T-cell (primary cell): ENCODE measurements at regions of chrX and their contacts with region 1.

Region 1: GRCh38 chrX:49000636-49001035 is 1.4 kb downstream of the GRIPAP1 start:
- DNase-seq: no peak
- ATAC-seq: no peak
- H3K4me3 ChIP-seq: no peak overlapping the region
- H3K4me3 Mint-ChIP-seq: peak overlapping the region; percentile 97 to 99 (median 98)
- H3K27ac ChIP-seq: no peak overlapping the region
- H3K27ac Mint-ChIP-seq: no peak overlapping the region
- H3K4me1 ChIP-seq: peaks cover 0 to 23% of the 10 kb centered on the region in 2 experiments
- H3K4me1 Mint-ChIP-seq: peaks cover 25 to 43% (median 29%) of the 10 kb centered on the region in 3 donors
- H3K27me3 ChIP-seq: no peaks in the 10 kb centered on the region
- H3K27me3 Mint-ChIP-seq: peaks cover 0 to 5% of the 10 kb centered on the region in 2 donors

Region 2: DNA sequence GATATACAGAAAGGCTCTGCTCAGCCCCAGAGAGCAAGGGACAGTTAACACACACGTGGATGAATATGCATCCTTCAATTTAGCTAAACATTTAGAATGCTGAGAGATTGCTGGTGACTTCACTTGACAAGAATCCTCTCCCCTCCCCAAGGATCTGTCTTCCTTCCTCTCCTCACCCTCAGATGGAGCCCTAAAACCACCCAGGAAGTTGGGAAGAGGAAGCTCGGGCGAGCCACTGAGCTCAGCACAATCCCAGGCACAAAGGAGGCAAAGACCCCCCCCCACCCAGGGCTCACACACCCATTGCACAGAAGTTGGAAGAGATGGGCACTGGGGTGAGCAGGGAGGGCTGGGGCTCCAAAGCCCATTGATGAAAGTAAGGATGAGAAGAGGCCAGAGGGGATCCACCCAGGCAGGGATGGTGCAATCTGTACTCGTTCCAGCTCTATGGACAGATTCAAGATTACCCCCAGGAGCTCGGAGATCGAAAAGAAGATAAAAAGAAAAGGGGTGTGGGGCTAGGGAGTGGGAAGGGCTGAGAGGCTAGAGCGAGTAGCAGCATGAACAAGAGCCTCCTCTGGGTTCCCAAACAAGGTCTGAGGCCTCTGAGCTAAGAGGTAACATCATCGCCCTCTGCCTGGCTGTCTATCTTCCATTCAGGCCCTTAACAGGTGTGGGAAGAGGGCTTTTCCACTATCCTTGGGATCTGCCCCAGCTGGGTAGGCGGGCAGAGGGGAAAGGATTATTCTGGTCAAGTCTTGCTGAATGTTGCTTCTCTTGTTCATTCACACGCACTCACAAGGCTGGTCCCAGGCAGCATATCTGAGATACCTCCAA is 41.3 kb after region 1 on chrX:
- CTCF ChIA-PET with region 1: interaction called in 1 of 2 experiments, 8 read pairs
- POLR2A ChIA-PET with region 1: interaction called, 6 to 11 read pairs
- DNase-seq: peak in 2 of 35 experiments; percentile 3 to 19
- ATAC-seq: no peak
- H3K4me3 ChIP-seq: peak overlapping the region; percentile 62 to 63
- H3K4me3 Mint-ChIP-seq: peak overlapping the region; percentile 80 to 89 (median 84)
- H3K27ac ChIP-seq: peak overlapping the region; percentile 84
- H3K27ac Mint-ChIP-seq: peak overlapping the region; percentile 91 to 92
- H3K4me1 ChIP-seq: peaks cover 2 to 34% of the 10 kb centered on the region in 2 experiments
- H3K4me1 Mint-ChIP-seq: peaks cover 32 to 46% (median 40%) of the 10 kb centered on the region in 3 donors
- H3K27me3 ChIP-seq: no peaks in the 10 kb centered on the region
- H3K27me3 Mint-ChIP-seq: no peaks in the 10 kb centered on the region

Region 3: GRCh38 chrX:49656533-49656932 is 655.9 kb after region 1 on chrX:
- CTCF ChIA-PET with region 1: no interaction called
- POLR2A ChIA-PET with region 1: no interaction called
- DNase-seq: no peak
- ATAC-seq: no peak
- H3K4me3 ChIP-seq: no peak overlapping the region
- H3K4me3 Mint-ChIP-seq: no peak overlapping the region
- H3K27ac ChIP-seq: no peak overlapping the region
- H3K27ac Mint-ChIP-seq: no peak overlapping the region
- H3K4me1 ChIP-seq: no peaks in the 10 kb centered on the region
- H3K4me1 Mint-ChIP-seq: peaks cover 0 to 3% (median 0%) of the 10 kb centered on the region in 3 donors
- H3K27me3 ChIP-seq: no peaks in the 10 kb centered on the region
- H3K27me3 Mint-ChIP-seq: peaks cover 5 to 22% of the 10 kb centered on the region in 2 donors